Psoas muscle (tissue), 8 donors: ENCODE measurements at regions of chr6 and their contacts with region 1.

Region 1: GRCh38 chr6:152151920-152152319 is 344.4 kb downstream of the ESR1 start:
- DNase-seq: no peak
- ATAC-seq: no peak
- H3K4me3 ChIP-seq: no peak overlapping the region
- H3K27ac ChIP-seq: no peak overlapping the region
- H3K4me1 ChIP-seq: peaks cover 15% of the 10 kb centered on the region
- H3K27me3 ChIP-seq: no peaks in the 10 kb centered on the region
- CTCF ChIP-seq: no peak

Region 2: DNA sequence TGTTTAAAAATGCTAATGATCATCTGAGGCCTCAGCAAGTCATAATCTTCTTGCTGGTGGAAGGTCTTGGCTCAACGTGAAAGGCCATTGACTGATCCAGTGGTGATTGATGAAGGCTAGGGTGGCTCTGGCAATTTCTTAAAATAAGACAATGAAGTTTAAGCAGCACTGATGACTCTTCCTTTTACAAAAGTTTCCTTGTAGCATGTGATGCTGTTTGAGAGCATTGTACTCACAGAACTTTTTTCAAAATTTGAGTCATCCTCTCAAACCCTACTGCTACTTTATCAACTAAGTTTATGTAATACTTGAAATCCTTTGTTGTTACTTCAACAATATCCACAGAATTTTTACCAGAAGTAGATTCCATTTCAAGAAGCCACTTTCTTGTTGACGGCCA is 37.8 kb after region 1 on chr6:
- intact Hi-C with region 1: no loop called
- DNase-seq: no peak
- ATAC-seq: no peak
- H3K4me3 ChIP-seq: no peak overlapping the region
- H3K27ac ChIP-seq: no peak overlapping the region
- H3K4me1 ChIP-seq: peaks cover 4% of the 10 kb centered on the region
- H3K27me3 ChIP-seq: no peaks in the 10 kb centered on the region
- CTCF ChIP-seq: no peak

Region 3: GRCh38 chr6:152261179-152261578 is 109.3 kb after region 1 on chr6:
- intact Hi-C with region 1: loop called in 1 of 2 experiments (anchors 5 kb)
- DNase-seq: peak; percentile 39 to 66
- ATAC-seq: peak; percentile 97 to 99 (median 98)
- H3K4me3 ChIP-seq: no peak overlapping the region
- H3K27ac ChIP-seq: peak overlapping the region; percentile 48
- H3K4me1 ChIP-seq: peaks cover 25% of the 10 kb centered on the region
- H3K27me3 ChIP-seq: no peaks in the 10 kb centered on the region
- CTCF ChIP-seq: no peak

Region 4: DNA sequence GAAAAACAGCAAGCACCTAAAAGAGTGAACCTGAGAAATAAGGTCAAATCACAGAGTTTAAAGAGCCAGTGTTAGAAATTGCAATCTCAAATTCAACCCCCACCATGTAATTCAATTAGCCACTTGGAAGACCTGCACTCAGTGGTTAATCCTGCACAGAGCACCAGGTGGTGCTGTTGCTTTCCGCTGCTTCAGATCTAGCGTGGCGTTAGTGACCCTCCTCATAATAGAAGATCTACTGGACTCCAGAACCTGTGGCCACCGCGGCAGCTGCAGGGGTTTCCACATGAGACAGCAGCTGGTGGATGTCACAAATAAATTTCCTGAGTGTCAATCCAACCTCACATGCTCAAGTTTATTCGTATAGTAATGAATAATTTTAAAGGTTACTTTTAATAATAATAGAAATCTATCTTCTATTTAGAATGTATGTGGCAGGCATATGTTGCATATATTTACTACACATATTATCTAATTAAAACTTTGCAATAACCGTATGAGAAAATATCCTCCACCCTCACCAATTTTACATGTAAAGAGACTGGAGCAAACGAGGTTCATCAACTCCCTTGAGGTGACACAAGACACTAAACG is 400.8 kb after region 1 on chr6:
- intact Hi-C with region 1: no loop called
- DNase-seq: peak; percentile 51 to 71
- ATAC-seq: peak; percentile 54 to 87 (median 84)
- H3K4me3 ChIP-seq: no peak overlapping the region
- H3K27ac ChIP-seq: no peak overlapping the region
- H3K4me1 ChIP-seq: no peaks in the 10 kb centered on the region
- H3K27me3 ChIP-seq: no peaks in the 10 kb centered on the region
- CTCF ChIP-seq: peak; percentile 80